ENCODE measurements at regions of chr3 and their contacts with region 1.

Region 1: GRCh38 chr3:196711838-196712513 is at the starts of genes CEP19 and PIGX:
- DNase-seq: peak; percentile 81 to 97 (median 92)
- ATAC-seq: peak; percentile 88 to 90
- H3K4me3 Mint-ChIP-seq: peak within 1 kb of the TSS; percentile 85 to 98 (median 95)
- H3K27ac Mint-ChIP-seq: peak within 1 kb of the TSS; percentile 92 to 99 (median 98)
- H3K4me1 Mint-ChIP-seq: peaks cover 7 to 40% (median 28%) of the 10 kb centered on the region in 4 donors
- H3K27me3 Mint-ChIP-seq: no peaks in the 10 kb centered on the region
- polyA plus RNA-seq, gene CEP19: 4.4 to 6.9 (median 4.6) TPM
- polyA plus RNA-seq, gene PIGX: 28.9 to 32.6 (median 32.1) TPM

Region 2: DNA sequence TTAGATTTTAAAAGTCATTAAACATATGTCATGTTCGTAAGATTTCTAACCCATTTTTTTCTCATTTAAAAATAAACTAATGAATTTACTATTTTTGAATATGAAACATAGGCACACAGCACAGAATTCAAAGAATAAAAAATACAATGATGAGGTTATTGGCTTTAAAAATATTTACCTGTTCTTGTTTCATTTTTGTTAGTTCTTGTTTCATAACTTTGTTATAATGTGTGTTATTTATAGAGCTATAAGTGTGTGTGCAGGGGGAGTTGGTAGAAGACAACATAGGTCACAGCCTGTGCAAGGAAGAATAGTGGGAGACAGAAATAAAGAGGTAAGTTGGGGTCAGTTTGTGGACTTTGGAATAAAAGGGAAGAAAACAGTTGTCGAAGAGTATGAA is 103.3 kb before region 1 on chr3:
- POLR2A ChIA-PET with region 1: no interaction called
- DNase-seq: no peak
- ATAC-seq: no peak
- H3K4me3 Mint-ChIP-seq: no peak overlapping the region
- H3K27ac Mint-ChIP-seq: peak overlapping the region in 5 of 10 donors; percentile 39 to 87 (median 65)
- H3K4me1 Mint-ChIP-seq: peaks cover 18 to 46% (median 44%) of the 10 kb centered on the region in 4 donors
- H3K27me3 Mint-ChIP-seq: no peaks in the 10 kb centered on the region

Region 3: DNA sequence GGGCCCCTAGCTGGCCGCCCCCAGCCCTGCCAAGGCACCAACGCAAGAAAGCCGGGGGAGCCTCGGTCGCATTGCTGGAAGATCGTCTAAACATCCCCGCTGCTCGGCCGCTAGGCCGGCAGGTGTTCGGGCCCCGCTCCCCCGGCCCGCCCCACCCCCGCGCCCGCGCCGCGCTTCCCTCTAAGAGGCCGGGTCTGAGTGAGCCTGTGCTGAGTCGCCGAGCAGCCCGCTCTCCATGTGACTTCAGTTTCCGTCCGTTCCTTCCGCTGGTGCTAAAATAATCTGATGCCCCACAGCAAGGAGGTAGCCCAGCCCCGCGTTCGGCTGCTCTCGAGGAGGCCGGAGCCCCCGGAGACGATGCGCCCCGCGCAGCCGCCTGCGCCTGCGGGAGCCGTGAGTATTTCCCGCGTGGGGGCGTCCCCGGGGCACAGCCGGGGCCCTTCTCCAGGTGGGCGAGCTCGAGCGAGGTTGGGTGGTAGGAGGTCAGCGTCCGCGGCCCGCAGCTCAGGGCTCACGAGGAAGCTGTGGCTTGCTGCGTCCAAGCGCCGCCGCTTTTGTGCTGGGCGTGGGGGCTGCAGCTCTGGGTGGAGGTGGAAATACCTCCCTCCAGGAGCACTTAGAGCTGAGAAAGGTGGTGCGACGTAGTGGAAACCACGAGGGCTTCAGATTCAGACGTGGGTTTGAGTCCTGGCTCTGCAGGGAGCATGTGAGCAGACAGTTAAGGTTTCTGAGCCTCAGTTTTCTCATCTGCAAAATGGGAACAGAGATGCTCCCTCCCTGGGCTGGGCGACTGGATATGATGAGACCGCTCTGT is 72.3 kb before region 1 on chr3 and contains the start of gene NRROS:
- POLR2A ChIA-PET with region 1: no interaction called
- DNase-seq: peak; percentile 15 to 72 (median 45)
- ATAC-seq: peak; percentile 70 to 73
- H3K4me3 Mint-ChIP-seq: peak within 1 kb of the TSS; percentile 72 to 90 (median 85)
- H3K27ac Mint-ChIP-seq: peak within 1 kb of the TSS; percentile 84 to 93 (median 88)
- H3K4me1 Mint-ChIP-seq: peaks cover 18 to 85% (median 69%) of the 10 kb centered on the region in 4 donors
- H3K27me3 Mint-ChIP-seq: no peaks in the 10 kb centered on the region
- polyA plus RNA-seq, gene NRROS: 0.29 to 0.92 (median 0.87) TPM

Region 4: GRCh38 chr3:196670339-196670738 is 41.6 kb before region 1 on chr3:
- POLR2A ChIA-PET with region 1: interaction called, 12 read pairs
- DNase-seq: no peak
- ATAC-seq: no peak
- H3K4me3 Mint-ChIP-seq: peak overlapping the region in 9 of 10 donors; percentile 33 to 61 (median 48)
- H3K27ac Mint-ChIP-seq: peak overlapping the region in 6 of 10 donors; percentile 7 to 78 (median 62)
- H3K4me1 Mint-ChIP-seq: peaks cover 7 to 36% (median 13%) of the 10 kb centered on the region in 4 donors
- H3K27me3 Mint-ChIP-seq: no peaks in the 10 kb centered on the region